Spleen (tissue), 13 donors: ENCODE measurements at regions of chr10 and their contacts with region 1.

Region 1: DNA sequence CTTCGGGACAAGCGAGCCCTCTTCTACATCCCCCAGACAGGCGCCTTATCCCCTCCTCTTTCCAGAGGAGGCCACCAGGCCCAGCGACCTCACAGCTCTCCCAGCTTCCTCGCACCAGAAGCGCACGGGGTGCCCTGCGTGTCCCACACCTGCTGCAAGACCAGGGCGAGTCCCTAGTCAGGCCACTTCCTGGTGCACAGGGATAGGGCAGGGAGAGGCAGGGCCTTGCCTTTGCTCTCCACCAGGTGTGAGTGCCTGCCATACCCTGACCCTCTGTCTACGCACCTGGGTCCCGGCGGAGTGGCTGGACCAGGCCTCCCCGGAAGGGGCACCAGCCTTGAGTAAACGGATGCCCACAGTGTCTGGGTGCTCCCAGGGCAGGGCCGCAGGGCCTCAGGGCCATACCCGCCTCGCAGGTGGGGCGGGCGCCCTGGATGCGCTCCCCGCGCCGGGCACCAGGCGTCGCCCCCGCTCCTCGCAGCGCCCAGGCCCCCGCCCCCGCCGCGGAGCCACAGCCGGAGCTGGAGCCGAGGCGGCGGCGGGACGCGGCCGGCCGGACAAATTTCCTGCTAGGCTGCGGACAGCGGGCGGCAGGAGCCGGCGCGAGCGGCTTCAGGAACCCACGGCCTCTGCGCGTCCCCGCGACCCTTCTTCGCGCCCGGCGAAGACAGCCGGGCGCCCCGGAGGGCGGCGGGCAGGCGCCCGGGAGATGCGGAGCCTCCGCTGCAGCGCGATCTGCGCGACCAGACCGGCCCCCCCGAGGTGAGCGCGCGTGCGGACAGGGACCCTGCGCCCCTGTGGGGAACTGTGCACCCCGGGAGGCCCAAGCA is at the start of gene PTPRE:
- DNase-seq: peak; percentile 96
- H3K4me3 ChIP-seq: peak within 1 kb of the TSS; percentile 62 to 83 (median 70)
- H3K27ac ChIP-seq: peak within 1 kb of the TSS; percentile 19 to 85 (median 82)
- H3K4me1 ChIP-seq: peaks cover 0 to 42% (median 26%) of the 10 kb centered on the region in 6 donors
- H3K27me3 ChIP-seq: peaks cover 0 to 28% (median 5%) of the 10 kb centered on the region in 7 donors
- CTCF ChIP-seq: peak in 10 of 11 experiments; percentile 47 to 92 (median 88)
- POLR2A ChIP-seq: no peak
- total RNA-seq, gene PTPRE: 63.7 to 133 (median 82.9) TPM

Region 2: GRCh38 chr10:127492607-127493250 is 414.0 kb before region 1 on chr10:
- intact Hi-C with region 1: no loop called
- DNase-seq: no peak
- H3K4me3 ChIP-seq: no peak overlapping the region
- H3K27ac ChIP-seq: no peak overlapping the region
- H3K4me1 ChIP-seq: no peaks in the 10 kb centered on the region
- H3K27me3 ChIP-seq: peaks cover 0 to 20% (median 0%) of the 10 kb centered on the region in 7 donors
- CTCF ChIP-seq: no peak
- POLR2A ChIP-seq: no peak

Region 3: DNA sequence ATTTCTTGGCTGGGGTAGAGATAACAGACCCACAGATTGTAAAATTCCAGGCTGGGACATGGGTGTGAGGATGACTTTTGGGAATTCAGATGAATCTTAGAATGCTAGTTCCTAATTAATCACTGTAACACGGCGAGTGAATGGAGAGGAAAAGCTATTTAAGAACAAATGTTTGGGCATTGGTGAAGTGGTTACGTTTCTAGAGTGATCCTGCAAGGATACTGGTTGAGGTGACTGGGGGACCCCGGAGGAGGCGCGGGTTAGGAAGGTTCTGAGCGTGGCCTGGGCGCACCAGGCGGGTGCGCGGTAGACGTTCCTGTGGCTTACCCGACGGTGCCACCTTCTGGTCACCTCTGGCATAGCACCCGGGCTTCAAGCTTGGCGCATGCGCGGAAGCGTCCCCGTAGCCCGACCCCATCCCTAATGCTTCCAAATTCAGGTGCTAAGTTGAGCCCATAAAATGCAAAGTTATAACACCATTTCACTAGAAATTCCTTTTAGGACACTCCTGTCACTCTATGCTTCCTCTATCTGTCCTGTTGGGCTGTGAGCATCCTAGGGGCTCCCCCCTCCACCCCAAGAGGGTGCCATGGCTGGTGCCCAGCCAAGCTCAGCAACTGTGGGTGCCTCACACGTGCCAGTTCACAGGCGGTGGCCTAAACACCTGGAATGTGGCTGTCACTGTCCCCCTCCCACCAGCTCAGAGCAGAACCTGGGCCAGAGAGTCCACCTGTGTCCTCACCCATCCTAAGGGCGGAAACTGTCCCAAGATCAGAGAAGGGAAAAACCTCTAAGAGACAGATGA is 104.6 kb after region 1 on chr10:
- intact Hi-C with region 1: loop called (anchors 2 kb)
- DNase-seq: peak; percentile 96
- H3K4me3 ChIP-seq: peak overlapping the region in 1 of 8 donors; percentile 41
- H3K27ac ChIP-seq: no peak overlapping the region
- H3K4me1 ChIP-seq: peaks cover 6 to 35% (median 24%) of the 10 kb centered on the region in 6 donors
- H3K27me3 ChIP-seq: no peaks in the 10 kb centered on the region
- CTCF ChIP-seq: peak; percentile 93 to 100 (median 99)
- POLR2A ChIP-seq: no peak

Region 4: DNA sequence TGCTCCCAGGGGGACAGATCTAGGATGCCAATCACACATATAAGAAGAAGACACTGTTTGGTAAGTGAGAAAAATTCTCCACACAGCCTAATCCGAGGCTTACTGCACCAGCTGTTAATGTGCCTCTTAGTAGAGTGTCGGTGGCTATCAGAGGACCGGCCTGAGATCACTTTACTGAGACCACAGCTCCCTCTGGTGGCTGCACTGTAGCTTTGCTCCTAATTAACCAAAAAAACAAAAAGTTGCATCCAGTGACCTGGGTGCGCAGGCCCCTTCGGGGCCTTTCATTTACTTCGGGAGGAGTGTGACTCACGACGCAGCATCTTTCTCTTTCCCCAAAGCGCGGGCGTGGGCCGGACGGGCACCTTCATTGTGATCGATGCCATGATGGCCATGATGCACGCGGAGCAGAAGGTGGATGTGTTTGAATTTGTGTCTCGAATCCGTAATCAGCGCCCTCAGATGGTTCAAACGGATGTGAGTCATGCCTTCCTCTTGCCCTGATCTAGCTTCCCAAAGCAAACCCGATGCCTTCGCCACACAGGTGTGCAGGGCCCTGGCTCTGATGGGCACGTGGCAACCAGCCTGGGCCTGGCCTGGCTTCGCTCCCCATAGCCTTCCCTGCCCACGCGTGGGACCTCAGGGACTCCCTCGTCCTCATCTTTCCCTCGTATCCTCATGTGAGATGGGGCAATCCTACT is 162.7 kb after region 1 on chr10:
- intact Hi-C with region 1: loop called (anchors 5 kb)
- DNase-seq: peak; percentile 93
- H3K4me3 ChIP-seq: no peak overlapping the region
- H3K27ac ChIP-seq: peak overlapping the region in 3 of 8 donors; percentile 10 to 39 (median 28)
- H3K4me1 ChIP-seq: peaks cover 13 to 47% (median 32%) of the 10 kb centered on the region in 6 donors
- H3K27me3 ChIP-seq: no peaks in the 10 kb centered on the region
- CTCF ChIP-seq: peak; percentile 64 to 88 (median 85)
- POLR2A ChIP-seq: no peak

Region 5: GRCh38 chr10:128087884-128088709 is 181.3 kb after region 1 on chr10:
- intact Hi-C with region 1: no loop called
- DNase-seq: no peak
- H3K4me3 ChIP-seq: no peak overlapping the region
- H3K27ac ChIP-seq: no peak overlapping the region
- H3K4me1 ChIP-seq: no peaks in the 10 kb centered on the region
- H3K27me3 ChIP-seq: peaks cover 0 to 6% (median 0%) of the 10 kb centered on the region in 7 donors
- CTCF ChIP-seq: no peak
- POLR2A ChIP-seq: no peak

Region 6: DNA sequence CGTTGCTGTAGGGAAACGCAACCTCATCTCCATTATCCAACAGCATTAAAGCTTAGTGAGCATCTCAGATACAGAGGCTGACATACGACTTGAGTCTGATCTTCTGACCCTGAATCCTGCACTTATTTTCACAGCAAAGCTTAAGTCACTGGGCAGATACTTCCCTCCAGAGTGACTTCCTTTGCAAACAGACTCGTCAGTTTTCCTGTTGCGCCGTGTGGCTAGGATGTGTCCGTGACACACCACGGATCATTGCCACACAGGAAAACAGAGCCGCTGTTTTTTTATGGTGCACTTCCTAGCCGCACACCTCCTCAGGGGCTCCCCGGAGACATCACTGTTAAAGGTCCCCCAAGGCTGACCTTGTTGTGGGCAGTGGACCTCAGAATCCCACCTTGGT is 314.4 kb after region 1 on chr10:
- intact Hi-C with region 1: no loop called
- DNase-seq: no peak
- H3K4me3 ChIP-seq: no peak overlapping the region
- H3K27ac ChIP-seq: peak overlapping the region in 2 of 8 donors; percentile 8 to 36
- H3K4me1 ChIP-seq: peaks cover 0 to 17% (median 5%) of the 10 kb centered on the region in 6 donors
- H3K27me3 ChIP-seq: peaks cover 0 to 28% (median 0%) of the 10 kb centered on the region in 7 donors
- CTCF ChIP-seq: no peak
- POLR2A ChIP-seq: no peak